Mammary epithelial cell (primary cell): ENCODE measurements at regions of chrX and their contacts with region 1.

Region 1: DNA sequence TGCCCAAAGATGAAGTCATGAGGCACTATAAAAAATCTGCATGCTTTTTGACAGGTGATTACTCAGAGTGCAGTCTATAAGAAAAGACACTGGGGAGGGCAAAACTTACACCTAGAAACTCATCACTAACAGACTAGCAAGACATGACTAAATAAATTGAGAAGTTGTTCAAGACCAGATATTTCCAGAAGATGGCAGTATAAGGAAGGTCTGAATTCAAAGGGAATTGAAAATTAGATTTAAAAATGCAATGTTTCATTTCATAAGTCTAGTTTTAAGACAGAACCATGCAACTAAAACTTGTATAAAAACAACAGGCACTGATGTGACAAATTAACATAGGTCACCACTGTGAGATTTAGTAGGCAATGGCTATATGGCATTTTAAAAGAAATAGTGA is 232.5 kb upstream of the POF1B start:
- DNase-seq: peak; percentile 1
- H3K4me3 ChIP-seq: no peak overlapping the region
- H3K27ac ChIP-seq: no peak overlapping the region
- H3K4me1 ChIP-seq: no peaks in the 10 kb centered on the region
- H3K27me3 ChIP-seq: no peaks in the 10 kb centered on the region
- CTCF ChIP-seq: peak; percentile 35 to 50

Region 2: GRCh38 chrX:86171366-86171765 is 559.4 kb after region 1 on chrX:
- CTCF ChIA-PET with region 1: no interaction called
- dilution Hi-C with region 1: no loop called
- in situ Hi-C with region 1: no loop called
- intact Hi-C with region 1: loop called (anchors 5 kb)
- DNase-seq: peak; percentile 51
- H3K4me3 ChIP-seq: no peak overlapping the region
- H3K27ac ChIP-seq: no peak overlapping the region
- H3K4me1 ChIP-seq: no peaks in the 10 kb centered on the region
- H3K27me3 ChIP-seq: no peaks in the 10 kb centered on the region
- CTCF ChIP-seq: peak; percentile 52 to 71

Region 3: DNA sequence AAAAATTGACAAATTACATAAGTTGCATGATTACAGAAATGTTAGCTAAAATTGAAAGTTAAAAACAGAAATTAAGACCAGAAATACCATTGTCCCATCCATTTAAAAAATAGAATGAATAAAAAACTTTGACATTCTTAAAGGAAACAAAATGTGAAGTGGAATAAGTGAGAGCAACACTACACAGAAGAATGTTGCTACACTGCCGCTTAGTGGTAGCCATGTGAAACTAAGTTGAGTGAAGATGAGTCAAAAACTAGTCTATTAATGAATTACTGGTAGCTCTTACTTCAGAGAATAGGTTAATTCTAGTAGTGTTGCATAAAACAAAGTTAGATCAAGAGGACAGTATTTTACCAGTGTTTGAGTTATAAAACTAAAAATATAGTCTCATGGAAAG is 1334.6 kb after region 1 on chrX:
- CTCF ChIA-PET with region 1: no interaction called
- dilution Hi-C with region 1: no loop called
- in situ Hi-C with region 1: loop called in 1 of 2 experiments (anchors 25 kb)
- intact Hi-C with region 1: loop called (anchors 5 kb)
- DNase-seq: peak; percentile 13
- H3K4me3 ChIP-seq: no peak overlapping the region
- H3K27ac ChIP-seq: no peak overlapping the region
- H3K4me1 ChIP-seq: no peaks in the 10 kb centered on the region
- H3K27me3 ChIP-seq: no peaks in the 10 kb centered on the region
- CTCF ChIP-seq: peak; percentile 82 to 83

Region 4: GRCh38 chrX:87272491-87272890 is 1660.6 kb after region 1 on chrX:
- CTCF ChIA-PET with region 1: no interaction called
- dilution Hi-C with region 1: no loop called
- in situ Hi-C with region 1: no loop called
- intact Hi-C with region 1: no loop called
- DNase-seq: no peak
- H3K4me3 ChIP-seq: no peak overlapping the region
- H3K27ac ChIP-seq: no peak overlapping the region
- H3K4me1 ChIP-seq: no peaks in the 10 kb centered on the region
- H3K27me3 ChIP-seq: no peaks in the 10 kb centered on the region
- CTCF ChIP-seq: no peak

Region 5: GRCh38 chrX:87299563-87300160 is 1687.7 kb after region 1 on chrX:
- CTCF ChIA-PET with region 1: no interaction called
- dilution Hi-C with region 1: no loop called
- in situ Hi-C with region 1: no loop called
- intact Hi-C with region 1: loop called (anchors 5 kb)
- DNase-seq: peak; percentile 1
- H3K4me3 ChIP-seq: no peak overlapping the region
- H3K27ac ChIP-seq: no peak overlapping the region
- H3K4me1 ChIP-seq: no peaks in the 10 kb centered on the region
- H3K27me3 ChIP-seq: peaks cover 2% of the 10 kb centered on the region
- CTCF ChIP-seq: peak; percentile 56 to 65